Activated naive CD4-positive, alpha-beta T cell treated with anti-CD3 and anti-CD28 coated beads for 36 hours (primary cell): ENCODE measurements at regions of chr11 and their contacts with region 1.

Region 1: GRCh38 chr11:16785520-16786128 is 47.2 kb downstream of the C11orf58 start:
- DNase-seq: peak; percentile 79
- H3K4me3 Mint-ChIP-seq: no peak overlapping the region
- H3K27ac Mint-ChIP-seq: no peak overlapping the region
- H3K4me1 Mint-ChIP-seq: no peaks in the 10 kb centered on the region
- H3K27me3 Mint-ChIP-seq: no peaks in the 10 kb centered on the region

Region 2: GRCh38 chr11:16769386-16769785 is 16.2 kb before region 1 on chr11:
- CTCF ChIA-PET with region 1: interaction called, 29 read pairs
- intact Hi-C with region 1: no loop called
- DNase-seq: no peak
- H3K4me3 Mint-ChIP-seq: no peak overlapping the region
- H3K27ac Mint-ChIP-seq: no peak overlapping the region
- H3K4me1 Mint-ChIP-seq: no peaks in the 10 kb centered on the region
- H3K27me3 Mint-ChIP-seq: peaks cover 2% of the 10 kb centered on the region

Region 3: DNA sequence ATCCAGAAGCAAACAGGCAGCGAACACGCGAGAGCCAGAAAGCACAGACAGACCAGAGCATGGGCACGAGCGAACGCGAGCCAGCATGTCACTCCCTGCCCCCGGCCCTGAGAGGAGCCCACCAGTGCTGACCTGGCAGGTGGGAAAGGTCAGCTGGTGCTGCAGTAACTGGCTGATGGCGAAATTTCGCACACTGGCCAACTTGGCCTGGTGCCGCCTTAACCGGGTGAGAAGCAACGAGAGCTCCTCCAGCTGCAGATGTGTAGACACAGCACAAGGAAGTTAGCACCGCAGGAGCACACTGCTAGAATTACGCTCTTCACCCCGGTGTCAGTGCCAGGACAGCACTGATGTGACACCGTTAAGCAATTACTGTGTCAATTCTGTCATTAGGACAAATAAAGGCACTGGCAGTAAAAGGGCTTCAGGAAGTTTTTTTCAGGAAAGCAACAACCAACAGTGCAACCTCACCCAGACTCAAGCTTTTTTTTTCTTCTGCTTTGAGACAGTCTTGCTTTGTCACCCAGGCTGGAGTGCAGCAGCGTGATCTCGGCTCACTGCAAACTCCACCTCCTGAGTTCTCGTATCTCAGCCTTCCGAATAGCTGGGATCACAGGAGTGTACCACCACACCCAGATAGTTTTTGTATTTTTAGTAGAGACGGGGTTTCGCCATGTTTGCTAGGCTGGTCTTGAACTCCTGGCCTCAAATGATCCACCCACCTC is 29.6 kb after region 1 on chr11:
- CTCF ChIA-PET with region 1: interaction called, 15 read pairs
- intact Hi-C with region 1: loop called (anchors 1 kb)
- DNase-seq: no peak
- H3K4me3 Mint-ChIP-seq: no peak overlapping the region
- H3K27ac Mint-ChIP-seq: no peak overlapping the region
- H3K4me1 Mint-ChIP-seq: no peaks in the 10 kb centered on the region
- H3K27me3 Mint-ChIP-seq: no peaks in the 10 kb centered on the region

Region 4: DNA sequence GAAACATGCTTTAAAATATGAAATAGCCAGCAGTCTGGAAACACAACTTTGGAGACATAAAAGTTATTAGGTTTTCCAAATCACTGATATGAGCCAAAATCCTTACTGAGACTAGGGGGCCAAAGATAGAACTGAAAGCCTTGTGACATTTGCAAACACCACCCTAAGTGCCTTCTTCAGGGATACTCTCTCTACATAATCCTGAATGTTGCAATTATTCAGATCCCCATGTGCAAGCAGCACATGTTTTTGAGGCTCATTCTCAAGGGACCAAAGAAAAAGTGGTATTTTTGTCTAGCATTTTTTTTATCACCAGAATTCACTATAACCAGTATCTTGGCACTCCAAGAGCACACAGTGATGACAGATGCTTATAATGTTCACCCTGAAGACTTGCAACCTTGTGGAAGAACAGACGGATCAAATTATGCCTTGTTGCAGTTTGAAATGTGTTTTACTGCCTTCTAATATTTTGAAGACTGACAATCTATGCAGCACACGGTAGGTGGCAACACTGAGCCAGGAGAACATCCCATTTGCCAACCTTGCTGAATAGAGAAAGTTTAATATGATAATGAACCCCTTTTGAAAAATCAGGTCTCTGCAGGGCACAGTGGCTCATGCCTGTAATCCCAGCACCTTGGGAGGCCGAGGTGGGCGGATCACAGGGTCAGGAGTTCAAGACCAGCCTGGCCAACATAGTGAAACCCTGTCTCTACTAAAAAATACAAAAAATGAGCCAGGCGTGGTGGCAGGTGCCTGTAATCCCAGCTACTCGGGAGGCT is 150.1 kb after region 1 on chr11:
- CTCF ChIA-PET with region 1: interaction called, 4 read pairs
- intact Hi-C with region 1: loop called (anchors 5 kb)
- DNase-seq: peak; percentile 53
- H3K4me3 Mint-ChIP-seq: no peak overlapping the region
- H3K27ac Mint-ChIP-seq: no peak overlapping the region
- H3K4me1 Mint-ChIP-seq: no peaks in the 10 kb centered on the region
- H3K27me3 Mint-ChIP-seq: peaks cover 5% of the 10 kb centered on the region

Region 5: GRCh38 chr11:17504330-17505107 is 718.9 kb after region 1 on chr11:
- CTCF ChIA-PET with region 1: interaction called, 3 read pairs
- intact Hi-C with region 1: loop called (anchors 1 kb)
- DNase-seq: peak; percentile 85
- H3K4me3 Mint-ChIP-seq: no peak overlapping the region
- H3K27ac Mint-ChIP-seq: no peak overlapping the region
- H3K4me1 Mint-ChIP-seq: no peaks in the 10 kb centered on the region
- H3K27me3 Mint-ChIP-seq: peaks cover 4% of the 10 kb centered on the region